ENCODE measurements at regions of chr1 and their contacts with region 1.

Region 1: GRCh38 chr1:113835642-113836307 is 23.5 kb upstream of the RSBN1 start:
- DNase-seq: no peak
- ATAC-seq: peak in 1 of 4 donors; percentile 58
- H3K4me3 ChIP-seq: no peak overlapping the region
- H3K27ac ChIP-seq: no peak overlapping the region
- H3K4me1 ChIP-seq: no peaks in the 10 kb centered on the region
- H3K27me3 ChIP-seq: no peaks in the 10 kb centered on the region
- CTCF ChIP-seq: peak; percentile 60

Region 2: DNA sequence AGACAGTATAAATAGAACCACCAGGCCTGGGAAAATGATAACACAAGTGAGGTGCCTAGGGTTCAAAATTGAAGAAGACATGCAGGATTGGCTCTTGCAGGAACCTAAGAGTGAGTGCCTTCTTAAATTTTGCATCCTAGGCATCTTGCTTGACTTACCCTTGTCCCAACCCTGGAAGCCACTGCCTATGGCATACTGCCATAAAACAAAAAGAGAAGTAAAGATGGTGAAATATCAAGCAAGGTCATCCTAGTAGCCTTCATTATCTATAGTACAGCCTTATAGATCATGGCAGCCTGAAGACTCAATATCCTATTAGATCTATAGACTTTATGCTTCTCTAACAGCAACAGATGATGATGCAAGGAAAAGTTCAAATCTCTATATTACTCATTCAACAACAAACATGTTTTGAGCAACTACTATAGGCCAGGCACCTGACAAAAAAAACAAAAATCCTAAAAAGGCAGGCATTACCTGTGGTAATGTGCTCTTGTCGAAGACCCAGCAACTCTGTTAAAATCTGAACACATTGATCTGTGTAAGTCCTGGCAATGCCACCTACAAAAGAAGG is 62.6 kb after region 1 on chr1:
- intact Hi-C with region 1: loop called in 1 of 2 experiments (anchors 10 kb)
- DNase-seq: no peak
- ATAC-seq: no peak
- H3K4me3 ChIP-seq: no peak overlapping the region
- H3K27ac ChIP-seq: no peak overlapping the region
- H3K4me1 ChIP-seq: peaks cover 2% of the 10 kb centered on the region
- H3K27me3 ChIP-seq: no peaks in the 10 kb centered on the region
- CTCF ChIP-seq: no peak

Region 3: GRCh38 chr1:113904674-113905434 is 69.1 kb after region 1 on chr1 and contains the starts of genes AP4B1 and DCLRE1B:
- intact Hi-C with region 1: loop called in 1 of 2 experiments (anchors 2 kb)
- DNase-seq: peak; percentile 99 to 100
- ATAC-seq: peak; percentile 95 to 97 (median 96)
- H3K4me3 ChIP-seq: peak within 1 kb of the TSS; percentile 91
- H3K27ac ChIP-seq: peak within 1 kb of the TSS; percentile 89
- H3K4me1 ChIP-seq: peaks cover 9% of the 10 kb centered on the region
- H3K27me3 ChIP-seq: no peaks in the 10 kb centered on the region
- CTCF ChIP-seq: peak; percentile 70
- total RNA-seq, gene AP4B1: 6.8 to 12.0 (median 9.3) TPM
- total RNA-seq, gene DCLRE1B: 1.8 to 2.3 (median 2.1) TPM

Region 4: DNA sequence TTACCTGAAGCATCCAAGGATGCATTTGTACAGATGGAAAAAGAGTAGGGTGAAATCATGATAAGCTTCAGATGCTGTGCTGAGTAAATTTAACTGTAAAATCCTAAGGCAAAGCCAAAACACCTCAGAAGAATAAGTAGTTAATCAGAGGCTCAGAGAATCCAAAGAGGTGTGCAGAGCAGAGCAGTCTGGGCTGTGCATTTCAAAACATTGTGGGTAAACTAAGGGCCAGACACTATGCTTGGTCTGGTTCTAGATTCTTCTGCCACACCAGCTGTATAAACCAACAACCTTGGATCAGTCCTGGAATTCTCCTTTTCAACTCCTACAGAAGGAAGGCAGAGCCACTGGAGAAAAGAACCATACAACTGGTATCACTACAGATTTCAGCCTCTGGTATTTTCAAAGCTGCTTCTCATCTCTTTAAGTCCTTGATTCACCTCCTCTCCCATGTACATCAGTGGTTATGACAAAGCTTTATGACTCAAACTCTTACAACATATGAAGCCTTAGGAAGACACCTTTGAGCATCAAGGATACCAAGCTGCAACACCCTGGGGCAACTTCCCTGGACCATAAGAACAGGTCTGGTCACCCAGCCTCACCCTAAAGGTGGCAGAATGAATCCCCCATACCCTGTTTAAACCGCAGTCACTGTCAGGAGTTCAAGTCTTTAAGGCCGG is 81.8 kb after region 1 on chr1:
- intact Hi-C with region 1: no loop called
- DNase-seq: no peak
- ATAC-seq: no peak
- H3K4me3 ChIP-seq: no peak overlapping the region
- H3K27ac ChIP-seq: no peak overlapping the region
- H3K4me1 ChIP-seq: peaks cover 11% of the 10 kb centered on the region
- H3K27me3 ChIP-seq: no peaks in the 10 kb centered on the region
- CTCF ChIP-seq: no peak

Region 5: DNA sequence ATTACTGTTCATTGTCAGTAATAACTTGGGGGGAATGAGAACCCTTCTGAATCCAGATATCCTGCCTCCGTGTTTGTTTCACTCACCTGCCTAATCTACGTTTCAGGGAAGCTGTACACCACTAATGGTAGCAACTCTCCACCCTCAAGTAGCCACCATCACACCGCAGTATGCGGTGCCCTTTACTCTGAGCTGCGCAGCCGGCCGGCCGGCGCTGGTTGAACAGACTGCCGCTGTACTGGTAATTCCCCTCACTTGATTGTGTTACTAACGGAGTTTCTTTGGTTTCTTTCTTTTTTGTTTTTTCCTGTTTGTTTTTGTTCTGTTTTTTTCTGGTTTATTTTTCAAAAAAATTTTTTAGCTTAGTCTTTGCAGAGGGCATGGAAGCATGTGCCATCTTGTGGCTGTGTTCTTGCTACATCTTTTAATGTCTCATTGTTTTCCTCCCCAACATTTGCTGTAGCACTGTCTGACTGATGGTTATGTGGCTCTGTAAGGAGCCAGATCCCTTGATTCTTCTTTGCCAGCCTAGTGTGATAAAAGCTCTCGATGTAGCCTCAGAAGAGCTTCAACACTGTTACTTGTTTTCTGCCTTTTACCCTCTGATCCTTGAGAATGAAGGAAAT is 127.6 kb after region 1 on chr1:
- intact Hi-C with region 1: loop called in 1 of 2 experiments (anchors 5 kb)
- DNase-seq: no peak
- ATAC-seq: no peak
- H3K4me3 ChIP-seq: no peak overlapping the region
- H3K27ac ChIP-seq: no peak overlapping the region
- H3K4me1 ChIP-seq: no peaks in the 10 kb centered on the region
- H3K27me3 ChIP-seq: no peaks in the 10 kb centered on the region
- CTCF ChIP-seq: no peak

Region 6: GRCh38 chr1:114282751-114283403 is 447.1 kb after region 1 on chr1:
- intact Hi-C with region 1: loop called (anchors 5 kb)
- DNase-seq: peak; percentile 88 to 94
- ATAC-seq: peak; percentile 95 to 100 (median 98)
- H3K4me3 ChIP-seq: no peak overlapping the region
- H3K27ac ChIP-seq: no peak overlapping the region
- H3K4me1 ChIP-seq: no peaks in the 10 kb centered on the region
- H3K27me3 ChIP-seq: no peaks in the 10 kb centered on the region
- CTCF ChIP-seq: peak; percentile 86

Measured in psoas muscle (tissue), 8 donors.